ENCODE measurements at regions of chr2 and their contacts with region 1.

Region 1: GRCh38 chr2:130366720-130367119 is 10.9 kb downstream of the PTPN18 start:
- DNase-seq: no peak
- CTCF ChIP-seq: no peak

Region 2: DNA sequence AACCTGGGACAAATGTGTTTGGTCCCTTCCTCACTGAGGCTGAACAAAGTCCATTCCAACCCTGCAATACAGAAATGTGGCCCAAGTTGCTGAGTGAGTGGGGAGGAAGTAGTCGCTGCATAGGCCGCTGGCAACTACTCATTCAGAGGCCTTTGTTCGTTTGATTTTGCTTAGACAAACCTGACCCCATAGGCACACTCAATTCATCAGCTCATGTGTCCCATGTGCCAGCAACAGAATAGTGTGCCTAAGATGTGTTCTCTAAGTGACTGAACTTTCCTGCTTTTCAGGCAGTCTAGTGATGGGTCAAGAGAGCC is 12.1 kb after region 1 on chr2:
- CTCF ChIA-PET with region 1: interaction called, 8 read pairs
- POLR2A ChIA-PET with region 1: interaction called, 12 read pairs
- DNase-seq: no peak
- CTCF ChIP-seq: no peak

Region 3: GRCh38 chr2:130963849-130964793 is 597.4 kb after region 1 on chr2:
- CTCF ChIA-PET with region 1: no interaction called
- POLR2A ChIA-PET with region 1: no interaction called
- DNase-seq: peak; percentile 40
- CTCF ChIP-seq: peak; percentile 9

Measured in GM10248 (cell line).